Pancreas (tissue), 10 donors: ENCODE measurements at regions of chr3 and their contacts with region 1.

Region 1: GRCh38 chr3:131794766-131795388 is 239.9 kb downstream of the CPNE4 start:
- DNase-seq: peak in 3 of 6 donors; percentile 9 to 45 (median 16)
- ATAC-seq: peak; percentile 80 to 95 (median 94)
- H3K4me3 ChIP-seq: no peak overlapping the region
- H3K27ac ChIP-seq: no peak overlapping the region
- H3K4me1 ChIP-seq: no peaks in the 10 kb centered on the region
- H3K27me3 ChIP-seq: no peaks in the 10 kb centered on the region
- CTCF ChIP-seq: peak; percentile 60 to 78 (median 72)

Region 2: GRCh38 chr3:131645638-131646037 is 149.2 kb before region 1 on chr3:
- intact Hi-C with region 1: no loop called
- DNase-seq: no peak
- ATAC-seq: no peak
- H3K4me3 ChIP-seq: no peak overlapping the region
- H3K27ac ChIP-seq: no peak overlapping the region
- H3K4me1 ChIP-seq: no peaks in the 10 kb centered on the region
- H3K27me3 ChIP-seq: no peaks in the 10 kb centered on the region
- CTCF ChIP-seq: no peak

Region 3: DNA sequence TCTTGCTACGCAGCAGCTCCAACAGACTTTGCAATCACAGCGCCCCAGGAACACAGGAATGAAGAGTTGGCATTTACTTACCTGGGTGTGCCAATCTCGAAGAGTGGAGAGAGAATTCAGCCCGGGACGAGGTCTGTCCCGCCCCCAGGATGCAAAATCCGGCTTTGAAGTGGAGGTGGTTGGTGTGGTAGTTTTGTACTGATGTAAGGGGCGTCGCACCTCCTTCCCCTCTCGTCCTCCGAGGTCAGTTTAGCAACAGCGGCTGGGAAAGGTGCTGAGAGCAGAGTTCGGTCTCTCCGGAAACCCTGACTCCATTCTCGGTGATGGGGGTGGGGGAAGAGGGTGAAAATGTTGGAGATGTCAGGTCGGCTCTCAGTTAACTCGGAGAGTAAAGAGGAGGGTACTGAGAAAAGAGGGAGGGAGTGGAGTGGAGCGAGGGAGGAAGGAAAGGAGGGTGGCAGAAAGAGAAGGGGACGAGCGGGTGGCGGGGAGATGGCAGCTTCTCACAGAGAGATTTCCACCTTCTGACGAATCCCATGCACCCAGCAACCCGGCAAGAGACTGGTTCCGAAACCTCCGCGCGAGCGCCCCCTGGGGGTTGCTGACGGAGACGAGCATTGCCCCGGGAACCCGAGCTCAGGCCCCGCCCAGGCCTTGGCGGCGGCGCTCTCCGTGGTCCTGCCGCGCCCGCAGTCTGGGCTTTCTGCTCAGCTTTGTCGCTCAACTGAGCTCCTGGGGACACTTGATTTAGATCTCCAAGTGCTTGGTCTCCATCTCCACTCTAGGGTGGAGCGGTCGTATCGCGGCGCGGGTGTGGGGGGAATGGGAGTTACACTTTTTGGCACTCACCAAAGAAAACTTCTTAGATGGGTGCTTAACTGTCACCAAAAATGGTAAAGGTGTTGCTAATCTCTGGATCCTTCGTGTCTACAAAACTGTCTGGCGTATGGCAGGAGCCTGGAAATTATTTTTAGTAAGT is 239.9 kb after region 1 on chr3 and contains the start of gene CPNE4:
- intact Hi-C with region 1: loop called in 1 of 3 experiments (anchors 10 kb)
- DNase-seq: peak; percentile 68 to 97 (median 85)
- ATAC-seq: peak; percentile 99 to 100 (median 99)
- H3K4me3 ChIP-seq: peak within 1 kb of the TSS in 1 of 4 donors; percentile 27
- H3K27ac ChIP-seq: no peak within 1 kb of the TSS
- H3K4me1 ChIP-seq: no peaks in the 10 kb centered on the region
- H3K27me3 ChIP-seq: peaks cover 0 to 35% (median 13%) of the 10 kb centered on the region in 4 donors
- CTCF ChIP-seq: peak; percentile 65 to 78 (median 74)
- total RNA-seq, gene CPNE4: 0.14 to 1.1 (median 0.50) TPM

Region 4: GRCh38 chr3:132399054-132399929 is 604.4 kb after region 1 on chr3:
- intact Hi-C with region 1: loop called in 1 of 3 experiments (anchors 10 kb)
- DNase-seq: peak in 1 of 6 donors; percentile 29
- ATAC-seq: peak in 3 of 4 donors; percentile 79 to 85 (median 82)
- H3K4me3 ChIP-seq: no peak overlapping the region
- H3K27ac ChIP-seq: no peak overlapping the region
- H3K4me1 ChIP-seq: no peaks in the 10 kb centered on the region
- H3K27me3 ChIP-seq: no peaks in the 10 kb centered on the region
- CTCF ChIP-seq: peak in 3 of 4 donors; percentile 53 to 61 (median 53)